Dendritic cell treated with granulocyte-macrophage colony-stimulating factor and Interleukin-4, amounts not matched to agents 40 ng/mL and 50 ng/mL, for 4 days (primary cell): ENCODE measurements at regions of chr11 and their contacts with region 1.

Region 1: DNA sequence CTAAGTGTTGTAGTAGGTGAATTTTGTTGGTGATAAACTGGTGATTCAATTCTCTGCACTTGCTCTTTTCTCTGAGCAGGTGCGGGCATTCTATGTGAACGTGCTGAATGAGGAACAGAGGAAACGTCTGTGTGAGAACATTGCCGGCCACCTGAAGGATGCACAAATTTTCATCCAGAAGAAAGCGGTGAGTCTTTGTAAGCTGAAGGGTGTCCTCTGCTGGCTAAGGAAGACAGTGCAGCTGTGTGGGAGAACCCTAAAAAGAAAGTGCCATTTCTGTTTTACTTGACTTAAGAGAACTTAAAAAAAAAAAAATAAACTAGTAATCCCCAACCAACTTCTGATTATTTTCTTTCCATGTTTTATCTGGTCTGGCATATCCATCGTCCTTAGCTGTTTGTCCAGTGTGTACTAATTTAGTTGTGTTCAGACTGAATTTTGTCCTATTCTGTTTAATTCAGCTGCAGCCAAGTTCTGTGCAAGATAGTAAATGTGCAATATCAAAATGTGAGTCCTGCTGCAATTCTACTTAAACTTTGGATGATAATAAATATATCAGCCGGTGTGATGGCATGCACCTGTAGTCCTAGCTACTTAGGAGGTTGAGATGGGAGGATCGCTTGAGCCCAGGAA is 29.6 kb downstream of the CAT start:
- H3K4me3 Mint-ChIP-seq: no peak overlapping the region
- H3K27ac Mint-ChIP-seq: no peak overlapping the region
- H3K4me1 Mint-ChIP-seq: peaks cover 10% of the 10 kb centered on the region
- H3K27me3 Mint-ChIP-seq: no peaks in the 10 kb centered on the region

Region 2: DNA sequence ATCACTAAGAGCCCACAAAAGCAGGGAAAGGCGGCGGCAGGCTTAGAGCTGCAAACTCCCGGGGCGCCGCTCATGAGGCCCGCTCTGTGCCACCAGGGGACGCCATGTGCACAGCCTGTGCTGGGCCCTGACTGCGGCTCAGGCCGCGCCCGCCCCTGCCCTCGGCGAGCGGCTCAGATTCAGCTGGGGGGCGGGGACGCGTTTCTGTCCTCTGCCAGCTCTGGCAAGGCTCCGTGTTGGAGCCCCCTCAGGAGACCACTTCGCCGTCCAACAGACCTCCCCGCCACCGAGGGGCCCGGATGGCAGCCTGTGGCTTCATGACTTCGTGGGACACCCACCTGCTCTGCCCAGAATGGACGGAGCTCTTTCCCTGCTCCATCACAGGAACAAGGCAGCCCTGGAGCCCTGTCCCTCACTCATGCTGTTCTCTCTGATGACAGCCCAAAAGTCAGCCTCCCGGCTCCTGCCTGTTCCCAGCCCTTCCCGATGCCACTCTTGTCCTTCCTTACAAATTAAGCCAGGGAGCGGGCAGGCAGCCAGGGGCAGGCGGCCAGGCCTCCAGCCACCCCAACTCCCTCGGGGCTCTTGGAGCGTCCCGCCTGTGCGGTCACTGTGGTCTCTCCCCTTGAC is 293.8 kb before region 1 on chr11:
- intact Hi-C with region 1: loop called (anchors 10 kb)
- H3K4me3 Mint-ChIP-seq: peak overlapping the region; percentile 70
- H3K27ac Mint-ChIP-seq: peak overlapping the region; percentile 24
- H3K4me1 Mint-ChIP-seq: peaks cover 26% of the 10 kb centered on the region
- H3K27me3 Mint-ChIP-seq: peaks cover 9% of the 10 kb centered on the region

Region 3: GRCh38 chr11:34251640-34251980 is 216.7 kb before region 1 on chr11:
- intact Hi-C with region 1: no loop called
- H3K4me3 Mint-ChIP-seq: peak overlapping the region; percentile 20
- H3K27ac Mint-ChIP-seq: peak overlapping the region; percentile 55
- H3K4me1 Mint-ChIP-seq: peaks cover 38% of the 10 kb centered on the region
- H3K27me3 Mint-ChIP-seq: no peaks in the 10 kb centered on the region

Region 4: GRCh38 chr11:34366522-34366921 is 101.8 kb before region 1 on chr11:
- intact Hi-C with region 1: loop called (anchors 2 kb)
- H3K4me3 Mint-ChIP-seq: no peak overlapping the region
- H3K27ac Mint-ChIP-seq: no peak overlapping the region
- H3K4me1 Mint-ChIP-seq: peaks cover 10% of the 10 kb centered on the region
- H3K27me3 Mint-ChIP-seq: no peaks in the 10 kb centered on the region